Activated naive CD4-positive, alpha-beta T cell treated with anti-CD3 and anti-CD28 coated beads for 36 hours (primary cell): ENCODE measurements at regions of chr10 and their contacts with region 1.

Region 1: DNA sequence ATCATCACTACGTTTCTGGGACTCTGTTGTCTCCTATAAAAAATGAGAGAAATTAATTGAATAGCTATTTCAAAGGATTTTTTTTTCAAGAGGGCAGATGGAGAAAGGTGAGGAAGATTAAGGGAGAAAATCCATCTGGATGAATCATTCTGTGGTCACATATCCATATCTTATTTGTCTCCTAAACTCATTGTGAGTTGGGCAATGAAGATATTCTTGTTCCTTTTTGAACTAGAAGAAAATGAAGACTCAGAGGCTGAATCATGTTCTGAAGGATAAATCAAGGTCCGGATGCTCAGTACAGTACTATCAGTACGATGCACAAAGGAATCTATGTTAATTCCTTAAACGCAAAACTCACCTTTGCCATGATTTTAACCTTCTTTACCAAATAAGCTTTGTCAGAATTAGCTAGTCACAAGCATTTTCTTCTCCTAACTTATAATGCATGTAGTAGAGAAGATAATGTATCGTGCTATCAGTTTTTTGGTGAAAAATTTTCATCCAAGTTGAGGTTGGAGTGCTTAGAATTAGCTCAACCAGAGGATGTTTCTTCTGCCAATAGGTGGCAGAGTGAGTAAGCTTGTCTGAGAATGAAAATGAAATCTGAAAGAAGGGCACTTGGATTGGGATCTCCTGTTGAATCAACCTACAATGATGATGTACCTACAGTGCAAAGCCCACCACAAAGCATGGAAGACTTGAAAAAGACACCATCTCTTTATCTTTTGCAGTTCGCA is 446.9 kb downstream of the KIF20B start:
- DNase-seq: no peak
- H3K4me3 Mint-ChIP-seq: no peak overlapping the region
- H3K27ac Mint-ChIP-seq: no peak overlapping the region
- H3K4me1 Mint-ChIP-seq: no peaks in the 10 kb centered on the region
- H3K27me3 Mint-ChIP-seq: no peaks in the 10 kb centered on the region

Region 2: DNA sequence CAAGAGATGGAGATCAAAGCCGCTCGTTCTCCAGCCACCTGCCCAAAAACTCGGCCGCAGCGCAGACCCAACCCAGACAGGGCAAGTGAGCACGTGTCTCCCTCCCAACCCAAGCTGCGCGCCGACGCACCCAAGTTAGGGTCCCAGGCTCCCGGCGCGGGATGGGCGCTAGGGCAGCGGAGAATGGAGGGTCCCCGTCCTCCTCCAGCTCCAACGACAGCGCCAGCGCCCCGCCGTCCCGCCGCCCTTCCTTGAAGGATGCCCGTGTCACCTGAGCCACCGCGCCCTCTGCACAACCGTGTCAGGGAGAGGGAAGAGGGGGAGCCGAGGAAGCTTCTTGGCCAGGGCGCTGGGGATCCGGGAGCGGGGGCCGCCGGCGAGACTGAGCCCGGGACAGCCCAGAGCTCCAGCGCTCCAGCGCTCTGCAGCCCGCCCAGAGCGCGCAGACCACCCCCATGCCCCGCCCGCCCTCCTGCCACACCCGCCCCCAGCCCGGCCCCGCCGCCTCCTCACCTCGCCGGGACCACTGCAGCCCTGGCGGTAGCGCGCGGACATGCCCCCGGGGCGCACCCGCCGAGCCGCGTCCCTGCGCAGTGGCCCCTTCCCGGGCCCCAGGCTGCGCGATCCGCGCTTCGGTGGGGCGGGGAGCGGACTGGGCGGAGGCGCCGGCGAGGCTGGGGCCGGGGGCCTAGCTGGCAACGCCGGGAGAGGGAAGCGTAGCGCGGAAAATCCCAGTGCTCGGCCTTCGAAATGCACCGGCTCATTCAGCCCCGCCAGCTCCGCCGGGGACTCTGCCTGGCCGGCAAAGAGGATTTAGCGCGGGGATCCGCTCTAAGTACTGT is 612.9 kb before region 1 on chr10 and contains the start of gene SLC16A12:
- CTCF ChIA-PET with region 1: no interaction called
- intact Hi-C with region 1: no loop called
- DNase-seq: no peak
- H3K4me3 Mint-ChIP-seq: peak within 1 kb of the TSS; percentile 25
- H3K27ac Mint-ChIP-seq: no peak within 1 kb of the TSS
- H3K4me1 Mint-ChIP-seq: peaks cover 8% of the 10 kb centered on the region
- H3K27me3 Mint-ChIP-seq: peaks cover 56% of the 10 kb centered on the region
- total RNA-seq, gene SLC16A12: not detected

Region 3: GRCh38 chr10:90167174-90168064 is 19.1 kb after region 1 on chr10:
- CTCF ChIA-PET with region 1: no interaction called
- intact Hi-C with region 1: no loop called
- DNase-seq: no peak
- H3K4me3 Mint-ChIP-seq: no peak overlapping the region
- H3K27ac Mint-ChIP-seq: no peak overlapping the region
- H3K4me1 Mint-ChIP-seq: no peaks in the 10 kb centered on the region
- H3K27me3 Mint-ChIP-seq: no peaks in the 10 kb centered on the region

Region 4: GRCh38 chr10:90592638-90593302 is 444.5 kb after region 1 on chr10:
- CTCF ChIA-PET with region 1: no interaction called
- intact Hi-C with region 1: loop called (anchors 2 kb)
- DNase-seq: peak; percentile 26
- H3K4me3 Mint-ChIP-seq: no peak overlapping the region
- H3K27ac Mint-ChIP-seq: no peak overlapping the region
- H3K4me1 Mint-ChIP-seq: no peaks in the 10 kb centered on the region
- H3K27me3 Mint-ChIP-seq: peaks cover 12% of the 10 kb centered on the region

Region 5: DNA sequence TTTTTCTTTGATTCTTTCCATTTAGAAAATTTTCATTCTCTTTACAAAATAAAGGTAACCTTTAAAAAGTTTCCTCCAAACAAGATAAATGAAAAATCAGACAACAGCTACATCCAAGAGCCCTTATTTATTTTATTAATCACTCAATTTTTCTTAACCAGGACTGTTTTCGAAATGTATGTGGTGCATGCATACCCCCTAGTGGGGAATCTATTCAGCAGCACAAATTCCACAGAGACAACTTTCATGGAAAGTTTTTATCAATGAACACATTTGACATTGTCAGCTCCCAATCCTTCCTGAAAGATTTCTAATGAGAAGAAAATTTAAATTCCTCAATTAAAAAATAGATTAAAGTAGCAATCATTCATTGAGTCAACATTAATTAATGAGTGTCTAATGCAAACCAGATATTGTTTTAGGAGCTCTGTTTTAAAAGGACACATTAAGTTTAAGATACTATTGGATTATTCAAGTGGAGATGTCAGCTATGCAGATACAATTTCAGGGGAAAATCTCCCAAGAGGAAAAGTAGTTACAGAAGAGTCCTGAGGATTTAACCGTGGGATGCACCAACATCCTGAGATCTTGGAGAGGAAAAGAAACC is 714.7 kb after region 1 on chr10:
- CTCF ChIA-PET with region 1: no interaction called
- intact Hi-C with region 1: loop called (anchors 2 kb)
- DNase-seq: peak; percentile 10
- H3K4me3 Mint-ChIP-seq: no peak overlapping the region
- H3K27ac Mint-ChIP-seq: no peak overlapping the region
- H3K4me1 Mint-ChIP-seq: peaks cover 4% of the 10 kb centered on the region
- H3K27me3 Mint-ChIP-seq: peaks cover 28% of the 10 kb centered on the region